A549 (cell line): ENCODE measurements at regions of chr9 and their contacts with region 1.

Region 1: DNA sequence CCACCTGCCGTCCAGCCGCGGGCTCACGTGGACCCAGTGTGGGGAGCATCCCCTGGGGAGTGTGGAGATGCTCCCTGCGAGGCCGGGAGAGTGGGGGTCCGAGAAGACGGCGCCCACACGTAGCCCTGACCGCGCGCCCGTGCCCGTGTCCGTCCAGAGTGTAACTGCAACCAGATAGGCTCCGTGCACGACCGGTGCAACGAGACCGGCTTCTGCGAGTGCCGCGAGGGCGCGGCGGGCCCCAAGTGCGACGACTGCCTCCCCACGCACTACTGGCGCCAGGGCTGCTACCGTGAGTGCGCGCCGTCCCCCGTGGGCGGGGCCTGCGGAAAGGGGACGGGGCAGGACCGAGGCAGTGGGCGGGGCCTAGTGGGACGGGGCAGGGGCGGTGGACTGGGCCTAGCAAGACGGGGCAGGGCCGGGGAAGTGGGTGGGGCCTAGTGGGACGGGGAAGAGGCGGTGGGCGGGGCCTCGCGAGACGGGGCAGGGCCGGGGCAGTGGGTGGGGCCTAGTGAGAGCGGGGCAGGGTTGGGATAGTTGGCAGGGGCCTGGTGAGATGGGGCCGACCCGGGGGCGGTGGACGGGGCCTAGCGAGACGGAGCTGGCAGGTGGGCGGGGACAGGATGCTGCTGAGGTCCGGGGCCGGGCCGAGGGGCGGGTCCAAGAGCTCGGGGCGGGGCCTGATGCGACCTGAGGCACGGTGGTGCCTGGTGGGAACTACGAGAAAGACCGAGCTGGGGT is 79.1 kb downstream of the NTNG2 start:
- DNase-seq: peak; percentile 86 to 97
- ATAC-seq: peak; percentile 67 to 88
- H3K4me3 ChIP-seq: peak overlapping the region; percentile 78
- H3K27ac ChIP-seq: peak overlapping the region in 1 of 2 experiments; percentile 79; a peak in 4 of 6 replicates
- H3K4me1 ChIP-seq: peaks cover 16% of the 10 kb centered on the region; the same call in 2 of the 3 replicates
- CTCF ChIP-seq: no peak
- EP300 ChIP-seq: no peak
- POLR2A ChIP-seq: 0 out of 2 replicates have a peak, but pooled peaks have one; percentile 13
- RAD21 ChIP-seq: no peak

Region 2: DNA sequence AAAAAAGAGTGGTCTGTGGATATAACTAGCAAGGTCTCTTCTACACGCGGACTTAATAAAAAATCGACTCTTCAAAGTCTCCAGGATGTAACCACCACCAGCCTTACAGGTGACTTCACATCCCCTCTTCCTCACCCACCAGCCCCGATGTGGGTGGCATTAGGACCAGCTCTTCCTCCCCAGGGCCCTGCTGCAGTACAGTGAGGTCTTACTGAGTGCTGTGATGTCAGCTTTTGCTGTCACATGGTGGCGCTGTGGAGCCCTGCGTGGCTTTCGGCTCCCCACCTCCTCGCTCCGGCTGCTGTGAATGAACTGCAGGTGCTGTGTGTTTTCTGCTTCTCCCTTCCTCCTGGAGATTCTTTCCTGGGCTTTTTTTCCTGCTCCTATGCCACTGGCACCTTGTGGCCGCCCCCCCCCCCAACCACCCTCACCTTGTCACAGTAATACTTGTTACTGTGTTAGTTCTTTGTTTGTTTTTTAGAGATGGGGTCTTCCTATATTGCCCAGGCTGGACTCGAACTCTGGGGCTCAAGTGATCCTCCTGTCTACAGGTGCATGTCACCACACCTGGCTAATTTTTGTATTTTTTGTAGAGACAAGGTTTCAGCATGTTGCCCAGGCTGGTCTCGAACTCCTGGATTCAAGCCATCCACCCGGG is 485.3 kb before region 1 on chr9:
- CTCF ChIA-PET with region 1: interaction called, 263 read pairs
- POLR2A ChIA-PET with region 1: no interaction called
- DNase-seq: peak; percentile 71 to 81
- ATAC-seq: peak; percentile 97 to 98
- H3K4me3 ChIP-seq: no peak overlapping the region
- H3K27ac ChIP-seq: no peak overlapping the region
- H3K4me1 ChIP-seq: peaks cover 6% of the 10 kb centered on the region; the same call in 1 of the 3 replicates
- CTCF ChIP-seq: peak; percentile 84
- EP300 ChIP-seq: no peak
- POLR2A ChIP-seq: no peak
- RAD21 ChIP-seq: peak; percentile 61 to 67

Region 3: DNA sequence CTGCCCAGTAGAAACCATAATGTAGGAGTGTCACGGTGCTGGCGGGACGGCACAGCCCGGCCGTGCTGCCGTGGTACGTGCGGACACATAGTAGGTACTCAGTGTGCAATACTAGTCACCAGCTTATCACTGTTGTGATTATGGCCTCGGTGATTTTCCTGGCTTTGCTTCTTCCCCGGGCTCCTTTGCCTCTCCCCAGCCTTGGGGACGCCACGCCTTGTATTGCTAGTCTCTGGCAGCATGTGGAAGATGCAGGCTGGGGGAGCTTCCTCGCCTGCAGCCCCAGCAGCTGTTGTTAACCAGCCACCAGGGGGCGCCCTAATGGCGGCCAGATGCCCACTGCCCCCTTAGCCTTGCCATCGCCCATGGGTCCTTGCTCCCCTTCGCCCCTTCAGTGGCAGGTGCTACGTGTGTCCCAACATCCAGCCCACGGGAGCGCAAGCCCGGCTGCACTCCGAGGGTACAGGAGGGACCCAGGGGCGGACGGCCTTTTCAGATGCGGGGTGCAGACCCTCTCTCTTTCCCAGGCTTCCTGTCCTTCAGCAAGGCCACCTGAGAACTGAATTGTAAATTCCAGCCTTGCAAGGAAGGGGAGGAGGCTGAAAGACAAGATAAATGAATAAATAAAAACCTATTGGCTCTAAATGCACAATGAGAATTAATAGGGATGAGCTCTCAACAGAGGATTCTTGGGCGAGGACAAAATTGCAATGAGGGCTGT is 71.1 kb before region 1 on chr9:
- CTCF ChIA-PET with region 1: interaction called, 197 read pairs
- POLR2A ChIA-PET with region 1: interaction called, 3 read pairs
- DNase-seq: peak; percentile 58 to 66
- ATAC-seq: peak; percentile 66 to 85
- H3K4me3 ChIP-seq: no peak overlapping the region
- H3K27ac ChIP-seq: no peak overlapping the region
- H3K4me1 ChIP-seq: peaks cover 6% of the 10 kb centered on the region
- CTCF ChIP-seq: peak; percentile 84
- EP300 ChIP-seq: no peak
- POLR2A ChIP-seq: no peak
- RAD21 ChIP-seq: peak; percentile 61 to 67

Region 4: GRCh38 chr9:132201780-132202703 is 38.9 kb before region 1 on chr9:
- CTCF ChIA-PET with region 1: interaction called, 15 read pairs
- POLR2A ChIA-PET with region 1: no interaction called
- DNase-seq: peak in 1 of 2 experiments; percentile 20
- ATAC-seq: peak; percentile 73 to 81; a peak in 5 of 6 replicates
- H3K4me3 ChIP-seq: no peak overlapping the region
- H3K27ac ChIP-seq: no peak overlapping the region
- H3K4me1 ChIP-seq: no peaks in the 10 kb centered on the region
- CTCF ChIP-seq: peak; percentile 19; the same call in 2 of the 3 replicates
- EP300 ChIP-seq: no peak
- POLR2A ChIP-seq: no peak
- RAD21 ChIP-seq: 0 out of 5 replicates have a peak, but pooled peaks of 1 of the 2 experiments have one; percentile 18

Region 5: GRCh38 chr9:132214027-132214622 is 26.8 kb before region 1 on chr9:
- CTCF ChIA-PET with region 1: interaction called, 18 read pairs
- POLR2A ChIA-PET with region 1: no interaction called
- DNase-seq: peak; percentile 51 to 72
- ATAC-seq: peak; percentile 83 to 86
- H3K4me3 ChIP-seq: no peak overlapping the region
- H3K27ac ChIP-seq: peak overlapping the region; percentile 53 to 67; a peak in 4 of 6 replicates
- H3K4me1 ChIP-seq: peaks cover 11% of the 10 kb centered on the region
- CTCF ChIP-seq: no peak
- EP300 ChIP-seq: no peak
- POLR2A ChIP-seq: no peak
- RAD21 ChIP-seq: no peak

Region 6: DNA sequence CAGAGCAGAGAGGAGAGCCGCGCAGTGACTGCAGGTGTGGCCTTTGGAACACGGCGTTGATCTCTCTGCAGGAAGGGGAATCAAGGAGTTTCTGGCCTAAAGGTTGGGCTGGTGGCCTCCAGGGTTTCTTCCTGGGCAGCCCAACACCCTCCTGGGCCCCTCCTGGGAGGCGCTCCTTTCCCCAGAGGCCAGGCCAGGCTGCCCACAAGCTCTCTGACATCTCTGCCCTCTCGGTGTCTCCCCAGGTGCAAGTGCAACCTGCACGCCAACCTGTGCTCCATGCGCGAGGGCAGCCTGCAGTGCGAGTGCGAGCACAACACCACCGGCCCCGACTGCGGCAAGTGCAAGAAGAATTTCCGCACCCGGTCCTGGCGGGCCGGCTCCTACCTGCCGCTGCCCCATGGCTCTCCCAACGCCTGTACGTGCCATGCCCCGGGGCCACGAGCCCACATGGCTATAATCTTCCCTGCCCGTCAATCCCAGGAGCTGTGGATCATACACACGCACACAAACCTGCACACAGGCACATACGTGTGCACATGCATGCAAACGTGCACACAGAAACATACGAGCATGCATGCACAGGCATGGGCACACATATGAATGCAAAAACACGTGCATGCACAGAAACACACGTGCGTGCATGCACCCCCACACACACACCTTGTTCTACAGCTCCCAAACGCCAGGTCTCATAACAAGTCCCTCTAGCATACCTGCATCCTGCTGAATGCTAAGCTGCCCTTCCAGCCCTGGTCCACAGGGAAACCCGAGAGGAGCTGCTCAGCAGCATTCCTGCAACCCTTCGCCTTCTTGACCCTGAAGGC is 14.1 kb before region 1 on chr9:
- CTCF ChIA-PET with region 1: interaction called, 21 read pairs
- POLR2A ChIA-PET with region 1: no interaction called
- DNase-seq: no peak
- ATAC-seq: no peak
- H3K4me3 ChIP-seq: no peak overlapping the region
- H3K27ac ChIP-seq: no peak overlapping the region
- H3K4me1 ChIP-seq: no peaks in the 10 kb centered on the region
- CTCF ChIP-seq: no peak
- EP300 ChIP-seq: no peak
- POLR2A ChIP-seq: no peak
- RAD21 ChIP-seq: no peak

Region 7: DNA sequence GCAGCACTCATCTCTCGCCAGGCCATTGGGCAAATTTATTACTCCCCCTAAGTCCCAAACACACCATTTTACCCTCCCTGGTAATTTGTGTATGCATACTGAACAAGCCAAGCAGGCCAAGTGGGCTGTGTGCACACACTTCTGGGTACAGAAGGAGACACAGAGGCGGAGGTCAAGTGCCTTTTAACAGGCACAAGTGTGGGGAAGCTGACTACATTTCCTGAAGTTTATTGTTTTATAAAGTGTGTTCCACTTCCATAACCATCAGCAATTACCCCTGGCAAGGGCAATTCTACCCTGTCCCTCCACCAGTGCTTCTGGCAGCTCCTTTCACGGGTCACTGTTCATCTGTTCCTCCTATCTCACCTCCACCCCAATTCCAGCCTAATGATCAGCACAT is 19.9 kb after region 1 on chr9:
- CTCF ChIA-PET with region 1: interaction called, 11 read pairs
- POLR2A ChIA-PET with region 1: no interaction called
- DNase-seq: no peak
- ATAC-seq: no peak
- H3K4me3 ChIP-seq: no peak overlapping the region
- H3K27ac ChIP-seq: no peak overlapping the region
- H3K4me1 ChIP-seq: 0 out of 3 replicates have a peak, but pooled peaks cover 4% of the 10 kb centered on the region
- CTCF ChIP-seq: no peak
- EP300 ChIP-seq: no peak
- POLR2A ChIP-seq: no peak
- RAD21 ChIP-seq: no peak

Region 8: DNA sequence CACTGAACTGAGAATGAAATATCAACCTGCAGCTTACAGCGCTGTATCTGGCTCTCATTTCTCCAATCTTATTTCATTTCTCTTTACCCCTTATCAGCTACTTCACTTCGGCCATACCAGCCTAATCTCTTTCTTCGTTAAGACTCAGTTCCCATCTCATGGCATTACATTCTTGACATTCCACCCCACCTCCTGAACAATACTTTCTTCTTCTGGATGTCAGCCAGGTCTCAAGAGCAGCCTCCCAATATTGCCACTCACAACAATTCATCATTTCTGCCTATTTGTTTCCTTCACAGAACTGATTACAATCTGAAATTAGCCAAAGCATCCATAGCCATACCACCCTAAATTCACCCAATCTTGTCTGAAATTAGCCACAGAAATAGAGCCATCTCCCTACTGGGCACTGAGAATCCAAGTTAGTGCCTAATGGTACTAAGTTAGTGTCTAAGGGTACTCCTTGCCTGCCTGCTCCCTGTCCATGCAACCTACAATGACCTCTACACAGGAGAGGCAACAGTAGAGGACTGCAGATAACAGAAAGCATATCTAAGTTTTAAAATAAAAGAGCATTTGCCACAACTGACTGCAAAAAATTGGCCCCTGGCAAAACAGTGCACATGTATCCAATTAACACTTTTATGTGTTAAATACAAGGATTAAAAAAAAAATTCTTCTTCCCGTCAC is 78.6 kb after region 1 on chr9:
- CTCF ChIA-PET with region 1: no interaction called
- POLR2A ChIA-PET with region 1: no interaction called
- DNase-seq: no peak
- ATAC-seq: no peak
- H3K4me3 ChIP-seq: no peak overlapping the region
- H3K27ac ChIP-seq: no peak overlapping the region
- H3K4me1 ChIP-seq: no peaks in the 10 kb centered on the region
- CTCF ChIP-seq: no peak
- EP300 ChIP-seq: no peak
- POLR2A ChIP-seq: no peak
- RAD21 ChIP-seq: no peak